ENCODE measurements at regions of chr20 and their contacts with region 1.

Region 1: GRCh38 chr20:45095753-45096371 is 5.1 kb downstream of the KCNS1 start:
- DNase-seq: peak; percentile 18 to 78 (median 62)
- ATAC-seq: peak; percentile 69
- H3K4me3 ChIP-seq: no peak overlapping the region
- H3K4me3 Mint-ChIP-seq: no peak overlapping the region
- H3K27ac ChIP-seq: no peak overlapping the region
- H3K27ac Mint-ChIP-seq: no peak overlapping the region
- H3K4me1 ChIP-seq: peaks cover 10% of the 10 kb centered on the region
- H3K4me1 Mint-ChIP-seq: peaks cover 17% of the 10 kb centered on the region
- H3K27me3 ChIP-seq: peaks cover 2 to 16% of the 10 kb centered on the region in 2 experiments
- H3K27me3 Mint-ChIP-seq: peaks cover 28% of the 10 kb centered on the region
- CTCF ChIP-seq: peak; percentile 74

Region 2: GRCh38 chr20:44909872-44910689 is 185.8 kb before region 1 on chr20 and contains the start of gene PABPC1L:
- CTCF ChIA-PET with region 1: interaction called, 5 read pairs
- POLR2A ChIA-PET with region 1: no interaction called
- intact Hi-C with region 1: loop called in 1 of 2 experiments (anchors 2 kb)
- DNase-seq: peak; percentile 46 to 89 (median 79)
- ATAC-seq: peak; percentile 99
- H3K4me3 ChIP-seq: peak within 1 kb of the TSS; percentile 66 to 78
- H3K4me3 Mint-ChIP-seq: peak within 1 kb of the TSS; percentile 81
- H3K27ac ChIP-seq: peak within 1 kb of the TSS; percentile 19 to 35
- H3K27ac Mint-ChIP-seq: peak within 1 kb of the TSS; percentile 66
- H3K4me1 ChIP-seq: peaks cover 21% of the 10 kb centered on the region
- H3K4me1 Mint-ChIP-seq: peaks cover 30% of the 10 kb centered on the region
- H3K27me3 ChIP-seq: no peaks in the 10 kb centered on the region
- H3K27me3 Mint-ChIP-seq: no peaks in the 10 kb centered on the region
- CTCF ChIP-seq: no peak
- total RNA-seq, gene PABPC1L: 31.9 to 34.0 TPM

Region 3: DNA sequence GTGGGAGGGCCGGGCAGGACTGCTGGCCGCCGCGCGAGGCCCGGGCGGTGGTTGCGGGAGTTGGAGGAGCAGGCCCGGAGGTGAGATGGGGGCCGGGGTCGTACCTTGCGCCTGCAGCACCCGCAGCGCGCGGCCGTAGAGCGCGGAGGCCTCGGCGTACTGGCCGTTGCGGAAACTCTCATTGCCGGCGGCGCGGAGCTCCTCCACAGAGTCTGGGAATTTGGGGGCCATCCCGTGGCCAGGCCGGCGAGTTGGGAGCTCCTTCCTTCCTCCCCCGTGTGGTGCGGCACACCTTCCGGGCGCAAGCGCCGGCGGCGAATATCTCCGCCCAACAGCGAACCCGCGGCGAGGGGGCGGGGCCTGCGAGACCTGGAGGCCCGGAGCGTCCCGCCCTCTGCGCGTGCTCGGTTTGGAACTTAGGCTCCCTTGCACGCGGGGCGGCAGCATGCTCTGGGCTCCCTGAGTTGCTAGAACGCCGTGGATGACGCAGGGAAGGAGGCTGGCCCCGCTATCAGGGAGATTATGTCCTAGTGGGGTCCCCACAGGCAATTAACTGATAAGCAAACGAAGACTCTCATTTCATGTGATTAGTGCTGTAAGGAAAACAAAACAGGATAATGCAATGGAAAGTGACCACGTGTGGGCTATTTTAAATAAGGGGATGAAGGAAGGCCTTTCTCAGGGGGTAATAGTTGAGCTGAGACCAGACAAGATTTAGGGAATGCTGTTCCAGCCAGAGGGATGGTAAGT is 135.6 kb before region 1 on chr20 and contains the start of gene TOMM34:
- CTCF ChIA-PET with region 1: interaction called, 8 read pairs
- POLR2A ChIA-PET with region 1: no interaction called
- intact Hi-C with region 1: loop called in 1 of 2 experiments (anchors 5 kb)
- DNase-seq: peak; percentile 84 to 97 (median 95)
- ATAC-seq: peak; percentile 94
- H3K4me3 ChIP-seq: peak within 1 kb of the TSS; percentile 70 to 80
- H3K4me3 Mint-ChIP-seq: peak within 1 kb of the TSS; percentile 96
- H3K27ac ChIP-seq: peak within 1 kb of the TSS; percentile 58 to 60
- H3K27ac Mint-ChIP-seq: peak within 1 kb of the TSS; percentile 96
- H3K4me1 ChIP-seq: peaks cover 32% of the 10 kb centered on the region
- H3K4me1 Mint-ChIP-seq: peaks cover 56% of the 10 kb centered on the region
- H3K27me3 ChIP-seq: no peaks in the 10 kb centered on the region
- H3K27me3 Mint-ChIP-seq: no peaks in the 10 kb centered on the region
- CTCF ChIP-seq: no peak
- total RNA-seq, gene TOMM34: 11.9 to 12.4 TPM

Region 4: DNA sequence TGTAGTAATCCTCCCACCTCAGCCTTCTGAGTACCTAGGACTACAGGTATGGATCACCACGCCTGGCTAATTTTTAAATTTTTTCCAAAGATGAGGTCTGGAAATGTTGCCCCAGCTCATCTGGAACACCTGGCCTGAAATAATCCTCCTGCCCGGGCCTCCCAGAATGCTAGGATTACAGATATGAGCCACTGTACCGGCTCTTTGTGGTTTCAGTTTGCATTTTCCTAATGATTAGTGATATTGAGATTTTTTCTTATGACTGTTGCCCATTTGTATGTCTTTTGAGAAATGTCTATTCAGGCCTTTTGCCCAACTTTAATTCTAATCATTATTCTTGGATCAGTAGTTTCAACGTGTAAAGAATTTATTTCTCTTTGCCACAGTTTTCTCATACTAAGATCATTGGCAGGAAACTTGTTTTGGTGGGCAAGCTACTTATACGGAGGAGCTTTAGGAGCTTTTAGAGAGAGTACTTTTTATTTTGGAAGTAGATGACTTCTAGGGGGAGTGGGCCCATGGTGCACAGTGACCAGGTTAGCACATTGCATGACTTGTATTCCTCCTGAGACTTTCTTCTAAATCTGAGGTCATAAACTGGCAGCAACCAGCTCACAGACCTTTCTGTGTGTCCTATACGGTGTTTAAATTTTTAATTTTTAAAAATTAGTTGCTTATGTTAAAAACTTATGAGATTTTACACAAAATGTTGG is 67.3 kb before region 1 on chr20:
- CTCF ChIA-PET with region 1: interaction called, 10 read pairs
- POLR2A ChIA-PET with region 1: no interaction called
- intact Hi-C with region 1: no loop called
- DNase-seq: no peak
- ATAC-seq: no peak
- H3K4me3 ChIP-seq: no peak overlapping the region
- H3K4me3 Mint-ChIP-seq: peak overlapping the region; percentile 16
- H3K27ac ChIP-seq: peak overlapping the region in 1 of 2 experiments; percentile 21
- H3K27ac Mint-ChIP-seq: peak overlapping the region; percentile 86
- H3K4me1 ChIP-seq: peaks cover 59% of the 10 kb centered on the region
- H3K4me1 Mint-ChIP-seq: peaks cover 76% of the 10 kb centered on the region
- H3K27me3 ChIP-seq: no peaks in the 10 kb centered on the region
- H3K27me3 Mint-ChIP-seq: no peaks in the 10 kb centered on the region
- CTCF ChIP-seq: no peak

Region 5: GRCh38 chr20:45052698-45053429 is 43.0 kb before region 1 on chr20:
- CTCF ChIA-PET with region 1: interaction called, 44 read pairs
- POLR2A ChIA-PET with region 1: interaction called, 4 read pairs
- intact Hi-C with region 1: no loop called
- DNase-seq: peak in 4 of 9 experiments; percentile 18 to 67 (median 35)
- ATAC-seq: peak; percentile 62
- H3K4me3 ChIP-seq: no peak overlapping the region
- H3K4me3 Mint-ChIP-seq: peak overlapping the region; percentile 47
- H3K27ac ChIP-seq: peak overlapping the region; percentile 4 to 59
- H3K27ac Mint-ChIP-seq: peak overlapping the region; percentile 78
- H3K4me1 ChIP-seq: peaks cover 73% of the 10 kb centered on the region
- H3K4me1 Mint-ChIP-seq: peaks cover 86% of the 10 kb centered on the region
- H3K27me3 ChIP-seq: no peaks in the 10 kb centered on the region
- H3K27me3 Mint-ChIP-seq: no peaks in the 10 kb centered on the region
- CTCF ChIP-seq: no peak

Region 6: DNA sequence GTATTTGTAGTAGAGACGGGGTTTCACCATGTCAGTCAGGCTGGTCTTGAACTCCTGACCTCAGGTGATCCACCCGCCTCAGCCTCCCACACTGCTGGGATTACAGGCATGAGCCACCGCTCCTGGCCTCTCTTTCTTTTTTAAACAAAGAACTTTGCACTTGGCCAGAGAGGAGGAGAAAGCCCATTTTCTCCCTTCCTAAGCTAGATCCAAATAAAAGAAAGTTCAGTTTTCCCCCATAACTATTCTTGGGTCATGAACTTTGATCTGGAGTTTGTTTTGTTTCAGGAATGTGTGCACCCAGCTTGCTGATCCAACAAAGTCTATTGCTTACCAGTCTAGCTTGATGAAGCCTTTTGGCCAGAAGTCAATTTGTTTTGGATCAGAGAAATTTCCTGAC is 18.3 kb before region 1 on chr20:
- CTCF ChIA-PET with region 1: interaction called, 16 read pairs
- POLR2A ChIA-PET with region 1: interaction called, 3 read pairs
- intact Hi-C with region 1: no loop called
- DNase-seq: no peak
- ATAC-seq: no peak
- H3K4me3 ChIP-seq: no peak overlapping the region
- H3K4me3 Mint-ChIP-seq: no peak overlapping the region
- H3K27ac ChIP-seq: no peak overlapping the region
- H3K27ac Mint-ChIP-seq: no peak overlapping the region
- H3K4me1 ChIP-seq: no peaks in the 10 kb centered on the region
- H3K4me1 Mint-ChIP-seq: peaks cover 12% of the 10 kb centered on the region
- H3K27me3 ChIP-seq: no peaks in the 10 kb centered on the region
- H3K27me3 Mint-ChIP-seq: no peaks in the 10 kb centered on the region
- CTCF ChIP-seq: no peak

Region 7: GRCh38 chr20:45293041-45294002 is 197.5 kb after region 1 on chr20:
- CTCF ChIA-PET with region 1: interaction called, 15 read pairs
- POLR2A ChIA-PET with region 1: no interaction called
- intact Hi-C with region 1: loop called (anchors 2 to 5 kb)
- DNase-seq: peak; percentile 66 to 84 (median 80)
- ATAC-seq: peak; percentile 91
- H3K4me3 ChIP-seq: peak overlapping the region; percentile 39 to 76
- H3K4me3 Mint-ChIP-seq: peak overlapping the region; percentile 80
- H3K27ac ChIP-seq: no peak overlapping the region
- H3K27ac Mint-ChIP-seq: no peak overlapping the region
- H3K4me1 ChIP-seq: no peaks in the 10 kb centered on the region
- H3K4me1 Mint-ChIP-seq: peaks cover 13% of the 10 kb centered on the region
- H3K27me3 ChIP-seq: peaks cover 7 to 8% of the 10 kb centered on the region in 2 experiments
- H3K27me3 Mint-ChIP-seq: peaks cover 45% of the 10 kb centered on the region
- CTCF ChIP-seq: peak; percentile 90

Measured in CD8-positive, alpha-beta T cell (primary cell).